Head of caudate nucleus (tissue), 42 donors: ENCODE measurements at regions of chr2 and their contacts with region 1.

Region 1: DNA sequence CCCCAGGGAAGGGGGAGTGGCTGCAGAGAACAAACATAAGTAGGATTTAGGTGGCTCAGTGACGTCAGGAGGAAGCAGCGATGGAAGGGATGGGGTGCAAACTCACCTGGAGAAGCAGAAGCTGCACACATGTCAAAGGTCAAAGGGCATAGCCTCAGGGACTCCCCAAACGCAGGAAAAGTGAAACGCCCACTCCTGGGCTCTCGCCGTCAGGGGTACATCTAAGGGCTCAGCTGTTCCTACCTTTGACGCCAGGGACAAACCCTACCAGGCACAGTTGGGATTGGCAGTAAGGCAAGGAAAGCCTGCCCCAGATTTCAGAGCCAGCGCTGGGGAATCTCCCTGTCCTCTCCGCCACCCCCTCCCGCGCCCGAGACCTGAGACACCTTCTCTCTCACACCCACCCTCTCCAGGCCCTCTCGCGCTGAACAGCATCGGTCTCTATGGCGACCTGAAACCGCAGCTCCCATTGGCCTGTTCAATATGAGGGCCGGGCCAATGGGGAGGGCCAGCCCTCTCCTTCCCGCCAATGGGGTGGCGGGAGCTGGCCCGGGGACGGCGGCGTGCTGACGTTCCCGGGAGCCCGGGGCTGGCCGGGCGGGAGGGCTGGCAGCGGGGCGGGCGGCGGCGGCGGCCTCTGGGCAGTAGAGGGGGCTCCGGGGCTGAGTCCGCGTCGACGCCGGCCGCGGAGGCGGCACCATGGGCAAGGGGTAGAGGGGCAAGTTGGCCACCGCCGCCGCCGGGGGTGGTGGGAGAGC is at the starts of genes CCDC148 and PKP4:
- DNase-seq: peak; percentile 86 to 97 (median 93)

Region 2: GRCh38 chr2:158179660-158180059 is 276.8 kb before region 1 on chr2:
- intact Hi-C with region 1: loop called (anchors 10 kb)
- DNase-seq: no peak

Region 3: DNA sequence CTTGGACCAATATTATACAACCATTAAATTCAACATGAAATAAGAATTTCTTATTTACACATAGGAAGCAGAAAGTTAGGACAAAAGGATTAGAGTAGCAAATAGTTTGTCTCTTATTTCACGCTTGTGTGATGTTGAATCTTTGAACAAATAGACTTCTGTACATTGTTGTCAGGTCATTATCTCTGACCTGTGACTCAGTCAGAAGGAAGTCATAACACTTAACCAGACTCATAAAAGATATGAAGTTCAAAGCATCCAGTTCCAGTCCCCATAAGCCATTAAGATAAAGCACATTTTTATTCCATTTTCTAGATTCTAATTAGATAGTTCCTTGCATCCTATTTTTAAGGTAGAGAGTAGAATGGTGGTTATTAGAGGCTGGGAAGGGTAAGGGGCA is 224.0 kb before region 1 on chr2:
- intact Hi-C with region 1: no loop called
- DNase-seq: no peak

Region 4: GRCh38 chr2:158378926-158379325 is 77.6 kb before region 1 on chr2:
- intact Hi-C with region 1: no loop called
- DNase-seq: no peak

Region 5: GRCh38 chr2:158529379-158530259 is 73.1 kb after region 1 on chr2:
- intact Hi-C with region 1: no loop called
- DNase-seq: no peak

Region 6: GRCh38 chr2:158559252-158559651 is 102.8 kb after region 1 on chr2:
- intact Hi-C with region 1: no loop called
- DNase-seq: no peak

Region 7: GRCh38 chr2:158723917-158724690 is 267.6 kb after region 1 on chr2:
- intact Hi-C with region 1: loop called (anchors 5 kb)
- DNase-seq: peak in 33 of 42 donors; percentile 11 to 79 (median 59)

Region 8: GRCh38 chr2:158745044-158745865 is 288.8 kb after region 1 on chr2:
- intact Hi-C with region 1: loop called (anchors 5 kb)
- DNase-seq: peak; percentile 61 to 88 (median 78)